Naive thymus-derived CD4-positive, alpha-beta T cell (primary cell): ENCODE measurements at regions of chr16 and their contacts with region 1.

Region 1: GRCh38 chr16:89945670-89946069 is 2.9 kb upstream of the DEF8 start:
- DNase-seq: no peak
- ATAC-seq: no peak
- H3K4me3 ChIP-seq: no peak overlapping the region
- H3K4me3 Mint-ChIP-seq: no peak overlapping the region
- H3K27ac ChIP-seq: no peak overlapping the region
- H3K27ac Mint-ChIP-seq: no peak overlapping the region
- H3K4me1 ChIP-seq: peaks cover 10 to 11% of the 10 kb centered on the region in 2 donors
- H3K4me1 Mint-ChIP-seq: peaks cover 7 to 17% (median 9%) of the 10 kb centered on the region in 7 donors
- H3K27me3 ChIP-seq: no peaks in the 10 kb centered on the region
- H3K27me3 Mint-ChIP-seq: peaks cover 15 to 53% (median 17%) of the 10 kb centered on the region in 5 donors

Region 2: DNA sequence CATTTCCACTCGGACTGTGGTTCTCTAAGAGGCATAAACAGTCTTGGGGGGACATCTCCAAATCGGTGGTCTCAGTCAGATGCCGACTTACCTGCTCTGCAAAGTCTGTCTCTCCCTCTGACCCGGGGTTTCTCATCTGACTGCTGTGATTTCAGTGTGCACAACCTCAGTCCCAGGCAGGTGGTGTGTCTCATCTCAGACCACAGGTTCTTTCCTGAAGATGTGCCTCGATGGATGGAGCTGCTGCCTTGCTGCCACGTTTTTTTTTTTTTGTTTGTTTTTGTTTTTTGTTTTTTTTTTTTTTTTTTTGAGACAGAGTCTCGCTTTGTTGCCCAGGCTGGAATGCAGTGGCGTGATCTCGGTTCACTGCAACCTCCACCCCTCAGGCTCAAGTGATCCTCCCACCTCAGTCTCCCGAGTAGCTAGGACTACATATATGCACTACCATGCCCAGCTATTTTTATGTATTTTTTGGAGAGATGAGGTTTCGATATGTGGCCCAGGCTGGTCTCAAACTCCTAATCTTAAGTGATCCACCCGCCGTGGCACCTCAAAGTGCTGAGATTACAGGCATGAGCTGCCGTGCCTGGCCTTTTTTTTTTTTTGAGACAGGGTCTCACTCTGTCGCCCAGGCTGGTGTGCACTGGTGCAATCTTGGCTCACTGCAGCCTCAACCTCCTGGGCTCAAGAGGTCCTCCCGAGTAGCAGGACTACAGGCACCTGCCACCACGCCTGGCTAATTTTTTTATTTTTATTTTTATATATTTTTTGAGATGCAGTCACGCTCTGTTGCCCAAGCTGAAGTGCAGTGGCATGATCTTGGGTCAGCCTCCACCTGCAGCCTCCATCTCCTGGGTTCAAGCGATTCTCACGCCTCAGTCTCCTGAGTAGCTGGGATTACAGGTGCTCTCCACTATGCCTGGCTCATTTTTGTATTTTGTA is 102.0 kb before region 1 on chr16:
- CTCF ChIA-PET with region 1: no interaction called
- POLR2A ChIA-PET with region 1: no interaction called
- intact Hi-C with region 1: no loop called
- DNase-seq: no peak
- ATAC-seq: no peak
- H3K4me3 ChIP-seq: no peak overlapping the region
- H3K4me3 Mint-ChIP-seq: no peak overlapping the region
- H3K27ac ChIP-seq: no peak overlapping the region
- H3K27ac Mint-ChIP-seq: no peak overlapping the region
- H3K4me1 ChIP-seq: peaks cover 4 to 18% of the 10 kb centered on the region in 2 donors
- H3K4me1 Mint-ChIP-seq: peaks cover 5 to 16% (median 12%) of the 10 kb centered on the region in 7 donors
- H3K27me3 ChIP-seq: no peaks in the 10 kb centered on the region
- H3K27me3 Mint-ChIP-seq: peaks cover 0 to 5% (median 0%) of the 10 kb centered on the region in 5 donors

Region 3: GRCh38 chr16:89903006-89903405 is 42.7 kb before region 1 on chr16:
- CTCF ChIA-PET with region 1: no interaction called
- POLR2A ChIA-PET with region 1: no interaction called
- intact Hi-C with region 1: no loop called
- DNase-seq: no peak
- ATAC-seq: no peak
- H3K4me3 ChIP-seq: no peak overlapping the region
- H3K4me3 Mint-ChIP-seq: no peak overlapping the region
- H3K27ac ChIP-seq: no peak overlapping the region
- H3K27ac Mint-ChIP-seq: no peak overlapping the region
- H3K4me1 ChIP-seq: no peaks in the 10 kb centered on the region
- H3K4me1 Mint-ChIP-seq: no peaks in the 10 kb centered on the region
- H3K27me3 ChIP-seq: no peaks in the 10 kb centered on the region
- H3K27me3 Mint-ChIP-seq: no peaks in the 10 kb centered on the region

Region 4: GRCh38 chr16:89917773-89918452 is 27.8 kb before region 1 on chr16:
- CTCF ChIA-PET with region 1: no interaction called
- POLR2A ChIA-PET with region 1: interaction called, 5 read pairs
- intact Hi-C with region 1: loop called in 1 of 2 experiments (anchors 1 kb)
- DNase-seq: peak; percentile 53 to 83 (median 67)
- ATAC-seq: peak; percentile 81
- H3K4me3 ChIP-seq: peak overlapping the region; percentile 43
- H3K4me3 Mint-ChIP-seq: peak overlapping the region; percentile 67 to 86 (median 73)
- H3K27ac ChIP-seq: no peak overlapping the region
- H3K27ac Mint-ChIP-seq: peak overlapping the region in 4 of 9 donors; percentile 44 to 87 (median 71)
- H3K4me1 ChIP-seq: peaks cover 20 to 25% of the 10 kb centered on the region in 2 donors
- H3K4me1 Mint-ChIP-seq: peaks cover 20 to 52% (median 38%) of the 10 kb centered on the region in 7 donors
- H3K27me3 ChIP-seq: peaks cover 0 to 6% of the 10 kb centered on the region in 2 donors
- H3K27me3 Mint-ChIP-seq: peaks cover 4 to 30% (median 17%) of the 10 kb centered on the region in 5 donors

Region 5: GRCh38 chr16:89922884-89923690 is 22.6 kb before region 1 on chr16 and contains the start of gene TUBB3:
- CTCF ChIA-PET with region 1: no interaction called
- POLR2A ChIA-PET with region 1: interaction called, 5 read pairs
- intact Hi-C with region 1: loop called (anchors 1 kb)
- DNase-seq: peak in 1 of 9 donors; percentile 82
- ATAC-seq: peak; percentile 31
- H3K4me3 ChIP-seq: no peak within 1 kb of the TSS
- H3K4me3 Mint-ChIP-seq: peak within 1 kb of the TSS in 8 of 10 donors; percentile 27 to 78 (median 46)
- H3K27ac ChIP-seq: no peak within 1 kb of the TSS
- H3K27ac Mint-ChIP-seq: peak within 1 kb of the TSS in 1 of 9 donors; percentile 68
- H3K4me1 ChIP-seq: peaks cover 8 to 15% of the 10 kb centered on the region in 2 donors
- H3K4me1 Mint-ChIP-seq: peaks cover 12 to 41% (median 32%) of the 10 kb centered on the region in 7 donors
- H3K27me3 ChIP-seq: peaks cover 4 to 15% of the 10 kb centered on the region in 2 donors
- H3K27me3 Mint-ChIP-seq: peaks cover 6 to 42% (median 20%) of the 10 kb centered on the region in 5 donors
- total RNA-seq, gene TUBB3: 0.48 to 2.8 TPM in 2 of 5 experiments, not detected in the others

Region 6: GRCh38 chr16:89972244-89973234 is 26.9 kb after region 1 on chr16:
- CTCF ChIA-PET with region 1: no interaction called
- POLR2A ChIA-PET with region 1: interaction called, 3 read pairs
- intact Hi-C with region 1: loop called in 1 of 2 experiments (anchors 1 kb)
- DNase-seq: peak; percentile 86 to 97 (median 92)
- ATAC-seq: peak; percentile 96
- H3K4me3 ChIP-seq: peak overlapping the region; percentile 97
- H3K4me3 Mint-ChIP-seq: peak overlapping the region; percentile 96 to 100 (median 99)
- H3K27ac ChIP-seq: peak overlapping the region; percentile 82
- H3K27ac Mint-ChIP-seq: peak overlapping the region; percentile 89 to 99 (median 96)
- H3K4me1 ChIP-seq: peaks cover 12 to 22% of the 10 kb centered on the region in 2 donors
- H3K4me1 Mint-ChIP-seq: peaks cover 13 to 45% (median 30%) of the 10 kb centered on the region in 7 donors
- H3K27me3 ChIP-seq: no peaks in the 10 kb centered on the region
- H3K27me3 Mint-ChIP-seq: peaks cover 0 to 2% (median 0%) of the 10 kb centered on the region in 5 donors

Region 7: DNA sequence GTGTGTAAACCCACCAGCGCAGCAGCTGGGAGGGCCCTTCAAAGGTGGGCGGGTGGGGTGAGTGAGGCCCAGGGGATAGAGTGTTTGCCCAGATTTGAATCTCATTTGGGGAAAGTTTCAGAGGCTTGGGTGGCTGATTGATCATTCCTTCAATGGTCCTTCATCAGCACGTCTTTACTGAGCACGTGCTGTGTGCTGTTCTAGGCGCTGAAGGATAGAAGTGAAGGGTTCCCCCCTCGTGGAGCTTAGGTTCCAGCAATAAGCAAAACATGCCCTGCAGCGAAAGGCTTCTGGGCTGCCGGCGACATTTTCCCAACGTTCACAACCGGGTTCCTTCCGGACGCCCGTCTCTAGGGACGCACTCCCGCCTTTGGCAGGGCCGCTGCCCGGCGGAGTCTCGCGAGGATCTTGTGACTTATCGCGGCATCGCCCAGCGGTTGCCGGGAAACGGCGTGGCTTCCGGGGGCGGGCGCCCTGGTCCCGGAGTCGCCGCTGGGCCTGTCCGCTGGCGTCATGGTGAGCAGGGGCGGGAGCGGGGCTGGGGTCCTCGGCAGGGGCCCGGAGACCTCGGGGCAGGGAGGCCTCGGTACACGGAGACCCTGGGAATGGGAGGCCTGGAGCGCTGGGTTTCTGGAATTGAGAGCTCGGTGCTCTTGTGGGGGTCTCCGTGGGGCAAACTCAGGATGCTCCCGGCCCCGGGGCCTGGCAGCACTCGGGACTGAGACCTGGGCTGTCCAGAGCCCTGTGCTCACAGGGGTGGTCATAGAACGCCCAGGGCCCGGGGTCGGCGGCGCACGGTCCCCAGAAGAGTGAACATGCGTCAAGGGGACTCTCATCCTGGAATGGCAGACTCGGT is 76.8 kb after region 1 on chr16:
- CTCF ChIA-PET with region 1: no interaction called
- POLR2A ChIA-PET with region 1: no interaction called
- intact Hi-C with region 1: loop called (anchors 2 to 5 kb)
- DNase-seq: peak; percentile 51 to 89 (median 71)
- ATAC-seq: peak; percentile 80
- H3K4me3 ChIP-seq: peak overlapping the region; percentile 73
- H3K4me3 Mint-ChIP-seq: peak overlapping the region; percentile 75 to 82 (median 80)
- H3K27ac ChIP-seq: peak overlapping the region; percentile 69
- H3K27ac Mint-ChIP-seq: peak overlapping the region; percentile 67 to 84 (median 79)
- H3K4me1 ChIP-seq: peaks cover 11 to 31% of the 10 kb centered on the region in 2 donors
- H3K4me1 Mint-ChIP-seq: peaks cover 15 to 37% (median 28%) of the 10 kb centered on the region in 7 donors
- H3K27me3 ChIP-seq: no peaks in the 10 kb centered on the region
- H3K27me3 Mint-ChIP-seq: peaks cover 0 to 21% (median 0%) of the 10 kb centered on the region in 5 donors